Activated CD4-positive, alpha-beta T cell treated with anti-CD3 and anti-CD28 coated beads for 36 hours (primary cell): ENCODE measurements at regions of chr10 and their contacts with region 1.

Region 1: DNA sequence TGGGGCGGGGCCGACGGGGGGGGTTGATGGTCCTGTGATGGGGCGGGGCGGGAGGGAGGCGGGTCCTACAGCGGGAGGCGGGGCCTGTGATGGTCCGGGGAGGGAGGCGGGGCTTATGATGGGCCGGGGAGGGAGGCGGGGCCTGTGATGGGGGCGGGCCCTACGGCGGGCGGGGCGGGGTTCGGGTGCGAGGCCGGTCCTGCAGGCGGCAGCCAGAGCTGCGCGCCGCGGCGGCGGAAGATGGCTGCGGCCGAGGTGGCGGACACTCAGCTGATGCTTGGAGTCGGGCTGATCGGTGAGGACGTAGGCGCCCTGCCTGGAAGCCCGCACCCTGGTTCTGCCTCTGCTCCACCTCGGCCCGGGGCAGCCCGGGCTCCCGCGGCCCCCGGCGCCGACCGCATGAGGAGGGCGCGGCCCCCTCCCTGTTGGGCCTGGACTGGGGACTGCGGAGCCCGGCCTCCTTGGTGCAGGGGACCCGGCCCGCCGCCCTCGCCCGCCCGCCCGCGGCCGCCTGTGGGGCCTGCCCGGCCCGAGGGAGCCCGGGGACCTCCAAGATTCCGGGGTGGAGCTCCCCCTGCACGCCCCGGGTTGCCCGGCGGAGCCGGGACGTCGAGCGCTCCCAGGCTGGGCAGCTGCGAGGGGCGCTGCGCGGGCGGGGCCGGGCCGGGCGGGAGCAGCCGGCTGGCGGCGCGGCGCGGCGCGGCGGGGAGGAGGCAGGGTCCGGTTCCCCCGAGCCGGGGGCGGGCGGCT is at the start of gene DENND10:
- DNase-seq: peak; percentile 90
- ATAC-seq: peak; percentile 92
- H3K4me3 Mint-ChIP-seq: peak within 1 kb of the TSS; percentile 70
- H3K27ac Mint-ChIP-seq: no peak within 1 kb of the TSS
- H3K4me1 Mint-ChIP-seq: peaks cover 10% of the 10 kb centered on the region
- H3K27me3 Mint-ChIP-seq: no peaks in the 10 kb centered on the region
- total RNA-seq, gene DENND10: 20.5 to 21.9 TPM

Region 2: GRCh38 chr10:117609095-117609795 is 1494.8 kb before region 1 on chr10:
- CTCF ChIA-PET with region 1: no interaction called
- POLR2A ChIA-PET with region 1: no interaction called
- intact Hi-C with region 1: no loop called
- DNase-seq: no peak
- ATAC-seq: no peak
- H3K4me3 Mint-ChIP-seq: no peak overlapping the region
- H3K27ac Mint-ChIP-seq: no peak overlapping the region
- H3K4me1 Mint-ChIP-seq: no peaks in the 10 kb centered on the region
- H3K27me3 Mint-ChIP-seq: peaks cover 12% of the 10 kb centered on the region

Region 3: GRCh38 chr10:118341791-118342637 is 762.1 kb before region 1 on chr10 and contains the start of gene FAM204A:
- CTCF ChIA-PET with region 1: no interaction called
- POLR2A ChIA-PET with region 1: no interaction called
- intact Hi-C with region 1: loop called in 1 of 2 experiments (anchors 10 kb)
- DNase-seq: peak; percentile 96
- ATAC-seq: peak; percentile 98
- H3K4me3 Mint-ChIP-seq: peak within 1 kb of the TSS; percentile 81
- H3K27ac Mint-ChIP-seq: peak within 1 kb of the TSS; percentile 89
- H3K4me1 Mint-ChIP-seq: peaks cover 37% of the 10 kb centered on the region
- H3K27me3 Mint-ChIP-seq: no peaks in the 10 kb centered on the region
- total RNA-seq, gene FAM204A: 44.1 to 55.8 TPM

Region 4: GRCh38 chr10:118950190-118950680 is 153.8 kb before region 1 on chr10:
- CTCF ChIA-PET with region 1: no interaction called
- POLR2A ChIA-PET with region 1: no interaction called
- intact Hi-C with region 1: no loop called
- DNase-seq: no peak
- ATAC-seq: no peak
- H3K4me3 Mint-ChIP-seq: no peak overlapping the region
- H3K27ac Mint-ChIP-seq: no peak overlapping the region
- H3K4me1 Mint-ChIP-seq: no peaks in the 10 kb centered on the region
- H3K27me3 Mint-ChIP-seq: peaks cover 11% of the 10 kb centered on the region

Region 5: DNA sequence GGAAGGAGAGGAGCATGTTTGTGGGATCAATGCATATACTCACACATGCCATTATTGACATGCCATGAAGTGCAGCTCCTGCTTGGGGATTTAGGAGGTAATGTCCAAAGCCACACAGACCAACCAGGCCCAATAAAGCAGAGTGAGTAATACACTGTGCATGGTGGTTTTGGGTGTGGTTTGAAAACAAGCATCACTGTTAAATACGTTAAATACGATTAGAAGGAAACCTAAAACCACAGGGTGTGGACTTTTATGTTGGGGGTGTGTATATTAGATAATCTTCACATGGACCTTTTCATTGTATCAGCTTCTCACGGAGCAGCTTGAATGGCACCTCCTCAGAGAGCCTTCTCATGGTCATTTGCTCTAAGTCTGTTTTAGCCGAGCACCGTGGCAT is 13.1 kb before region 1 on chr10:
- CTCF ChIA-PET with region 1: no interaction called
- POLR2A ChIA-PET with region 1: no interaction called
- intact Hi-C with region 1: loop called in 1 of 2 experiments (anchors 1 kb)
- DNase-seq: no peak
- ATAC-seq: peak; percentile 65
- H3K4me3 Mint-ChIP-seq: no peak overlapping the region
- H3K27ac Mint-ChIP-seq: no peak overlapping the region
- H3K4me1 Mint-ChIP-seq: peaks cover 38% of the 10 kb centered on the region
- H3K27me3 Mint-ChIP-seq: no peaks in the 10 kb centered on the region

Region 6: DNA sequence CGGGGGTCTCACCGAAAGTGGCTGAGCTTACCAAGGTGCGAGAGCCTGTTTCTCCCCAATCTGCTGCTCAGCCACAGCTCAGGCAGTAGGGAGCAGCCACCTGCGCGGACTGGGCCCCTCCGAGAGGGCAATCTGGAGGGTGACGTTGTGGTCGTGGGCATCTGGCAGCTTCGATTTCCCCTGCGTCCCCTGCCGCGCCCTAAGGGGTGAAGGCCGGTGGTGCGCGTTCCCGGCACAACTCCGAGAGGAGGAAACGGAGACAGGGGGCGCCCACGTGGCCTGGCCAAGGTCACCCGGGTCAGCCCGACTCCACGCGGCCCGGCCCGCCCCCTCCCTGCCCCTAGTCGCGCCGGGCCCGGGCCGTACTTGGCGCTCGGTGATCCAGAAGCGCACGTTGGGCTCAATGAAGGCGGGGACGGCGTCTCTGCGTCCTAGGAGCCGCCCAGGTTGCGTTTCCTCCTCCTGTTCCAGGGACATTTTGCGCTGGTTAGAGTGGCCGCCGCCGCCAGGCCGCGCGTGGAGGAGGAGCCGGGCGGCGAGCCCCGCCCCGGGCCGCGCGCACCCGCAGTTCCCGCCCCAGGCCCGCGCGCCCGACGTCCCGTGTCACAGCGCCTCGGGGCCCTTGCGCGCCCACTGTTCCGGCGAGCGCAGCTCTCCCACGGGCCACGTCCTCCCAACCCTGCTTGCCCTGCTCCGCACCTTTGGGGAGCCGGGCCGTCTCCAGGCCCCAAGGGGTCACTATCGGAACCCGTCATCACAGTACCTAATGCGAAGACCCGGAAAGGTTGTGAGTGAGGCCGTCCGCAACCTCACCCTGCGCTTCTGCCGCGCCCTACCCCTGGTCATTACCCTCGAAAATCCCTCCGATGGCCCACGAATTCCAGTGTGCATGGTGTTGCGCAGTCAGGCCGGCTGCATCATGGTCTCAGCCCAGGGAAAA is 61.4 kb after region 1 on chr10 and contains the start of gene SFXN4:
- CTCF ChIA-PET with region 1: no interaction called
- POLR2A ChIA-PET with region 1: no interaction called
- intact Hi-C with region 1: loop called (anchors 1 to 2 kb)
- DNase-seq: peak; percentile 87
- ATAC-seq: peak; percentile 94
- H3K4me3 Mint-ChIP-seq: peak within 1 kb of the TSS; percentile 86
- H3K27ac Mint-ChIP-seq: peak within 1 kb of the TSS; percentile 94
- H3K4me1 Mint-ChIP-seq: peaks cover 40% of the 10 kb centered on the region
- H3K27me3 Mint-ChIP-seq: no peaks in the 10 kb centered on the region
- total RNA-seq, gene SFXN4: 38.7 to 44.7 TPM

Region 7: DNA sequence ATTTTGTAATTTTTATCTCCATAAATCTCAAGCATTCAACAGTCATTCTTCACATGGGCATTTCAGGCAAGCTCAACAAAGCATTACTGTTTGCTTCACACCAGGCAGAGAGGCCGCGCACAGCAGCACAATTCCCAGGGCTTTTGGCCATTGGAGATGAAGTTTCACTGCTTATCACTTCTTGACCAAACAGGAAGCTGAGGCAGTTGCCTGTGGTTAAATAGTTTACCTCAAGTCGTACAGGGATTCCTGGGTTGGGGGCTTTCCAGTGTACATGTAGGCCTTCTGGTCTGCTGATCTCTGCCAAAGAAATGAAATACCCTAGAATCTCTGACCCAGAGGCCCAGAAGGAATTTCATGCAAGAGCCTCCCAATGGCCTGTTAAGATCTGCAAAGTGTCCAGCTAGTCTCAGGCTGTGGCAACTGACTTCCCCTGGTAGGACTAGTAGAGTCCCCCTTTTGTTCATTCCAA is 85.8 kb after region 1 on chr10:
- CTCF ChIA-PET with region 1: no interaction called
- POLR2A ChIA-PET with region 1: no interaction called
- intact Hi-C with region 1: no loop called
- DNase-seq: no peak
- ATAC-seq: no peak
- H3K4me3 Mint-ChIP-seq: no peak overlapping the region
- H3K27ac Mint-ChIP-seq: no peak overlapping the region
- H3K4me1 Mint-ChIP-seq: peaks cover 21% of the 10 kb centered on the region
- H3K27me3 Mint-ChIP-seq: no peaks in the 10 kb centered on the region

Region 8: GRCh38 chr10:119253433-119254174 is 149.5 kb after region 1 on chr10:
- CTCF ChIA-PET with region 1: no interaction called
- POLR2A ChIA-PET with region 1: no interaction called
- intact Hi-C with region 1: no loop called
- DNase-seq: peak; percentile 81
- ATAC-seq: peak; percentile 82
- H3K4me3 Mint-ChIP-seq: no peak overlapping the region
- H3K27ac Mint-ChIP-seq: peak overlapping the region; percentile 88
- H3K4me1 Mint-ChIP-seq: peaks cover 55% of the 10 kb centered on the region
- H3K27me3 Mint-ChIP-seq: no peaks in the 10 kb centered on the region

Region 9: DNA sequence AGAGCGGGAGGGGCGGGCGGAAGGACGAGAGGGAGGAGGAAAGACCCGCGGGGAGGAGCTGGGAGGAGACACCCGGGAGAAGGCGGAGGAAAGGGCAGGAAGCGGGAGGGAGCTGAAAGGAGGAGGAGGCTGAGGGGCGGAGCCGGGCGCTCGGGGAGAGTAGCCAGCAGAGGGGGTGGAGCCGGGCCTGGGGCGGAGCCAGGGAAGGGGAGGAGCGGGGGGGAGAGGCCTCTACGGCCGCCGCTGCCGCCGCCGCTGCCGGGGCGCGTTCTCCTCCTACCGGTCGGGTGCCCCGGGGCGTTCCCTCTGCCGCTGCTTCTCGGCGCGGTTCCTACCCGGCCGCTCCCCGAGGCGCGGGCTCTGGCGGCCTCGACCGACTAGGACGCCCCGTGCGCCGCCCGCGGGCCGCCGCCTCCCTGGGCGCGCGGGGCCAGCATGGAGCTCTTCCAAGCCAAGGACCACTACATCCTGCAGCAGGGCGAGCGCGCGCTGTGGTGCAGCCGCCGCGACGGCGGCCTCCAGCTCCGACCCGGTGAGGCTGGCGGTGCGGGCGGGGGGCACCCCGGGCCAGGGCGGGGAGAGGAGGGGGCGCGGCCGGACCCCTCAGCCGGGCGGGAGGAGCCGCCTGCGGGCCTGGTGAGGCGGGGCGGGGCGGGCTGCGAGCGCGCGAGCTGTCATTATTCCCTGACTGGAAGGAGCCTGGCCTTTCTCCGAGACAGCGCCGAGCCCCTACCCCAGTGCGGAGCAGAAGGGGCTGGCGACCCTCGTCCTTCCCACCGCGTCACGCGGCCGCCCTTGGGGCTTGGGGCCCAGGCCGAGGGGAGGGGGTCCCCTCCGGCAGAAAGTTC is 622.0 kb after region 1 on chr10 and contains the start of gene INPP5F:
- CTCF ChIA-PET with region 1: no interaction called
- POLR2A ChIA-PET with region 1: no interaction called
- intact Hi-C with region 1: loop called in 1 of 2 experiments (anchors 10 kb)
- DNase-seq: peak; percentile 100
- ATAC-seq: peak; percentile 95
- H3K4me3 Mint-ChIP-seq: peak within 1 kb of the TSS; percentile 86
- H3K27ac Mint-ChIP-seq: peak within 1 kb of the TSS; percentile 73
- H3K4me1 Mint-ChIP-seq: peaks cover 47% of the 10 kb centered on the region
- H3K27me3 Mint-ChIP-seq: no peaks in the 10 kb centered on the region
- total RNA-seq, gene INPP5F: 10.9 to 12.6 TPM